H1 (cell line): ENCODE measurements at regions of chr19 and their contacts with region 1.

Region 1: DNA sequence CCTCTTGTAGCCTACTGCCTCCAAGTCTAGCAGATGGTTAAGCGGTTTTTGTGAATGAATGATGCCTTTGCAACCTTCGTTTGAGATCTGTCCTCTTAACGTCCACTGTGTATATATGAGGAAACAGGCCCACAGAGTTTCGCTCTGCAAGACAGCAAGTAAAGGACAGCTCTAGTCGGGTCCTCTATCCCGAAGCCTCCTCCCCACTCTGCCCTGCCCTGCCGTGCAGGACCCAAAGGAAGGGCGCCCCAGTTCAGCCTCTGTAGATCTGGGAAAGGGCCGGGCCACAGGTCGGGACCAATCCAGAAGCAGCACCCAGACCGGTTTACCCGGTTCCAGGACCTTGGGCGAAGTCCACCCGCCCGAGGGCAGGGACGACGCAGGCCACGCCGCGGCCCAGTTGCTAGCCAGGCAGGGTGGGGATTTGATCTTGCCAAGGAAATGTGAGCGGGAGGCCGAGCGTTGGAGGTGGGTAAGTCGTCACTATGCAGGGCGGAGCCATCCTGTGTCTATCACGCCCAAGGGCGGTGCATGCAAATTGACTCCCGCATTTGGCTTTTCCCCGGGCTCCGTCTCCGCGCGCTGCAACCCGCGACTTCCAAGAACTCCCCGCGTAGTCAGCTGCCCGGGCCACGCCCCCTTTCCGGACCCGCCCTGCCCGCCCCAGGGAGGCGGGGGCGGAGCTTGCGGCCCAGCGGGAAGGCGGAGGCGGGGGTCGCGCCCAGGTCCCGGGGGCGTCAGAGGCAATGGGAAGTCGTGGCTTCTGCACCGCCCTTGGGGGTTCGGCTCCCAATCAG is 12.5 kb downstream of the IER2 start:
- DNase-seq: peak; percentile 92 to 96
- H3K4me3 ChIP-seq: peak overlapping the region; percentile 13 to 62 (median 46); a peak in 7 of 8 replicates
- H3K27ac ChIP-seq: peak overlapping the region; percentile 95
- H3K4me1 ChIP-seq: peaks cover 16 to 31% (median 18%) of the 10 kb centered on the region in 4 experiments
- H3K27me3 ChIP-seq: no peaks in the 10 kb centered on the region
- CTCF ChIP-seq: no peak
- EP300 ChIP-seq: no peak
- POLR2A ChIP-seq: peak; percentile 17 to 66; a peak in 2 of 3 replicates
- RAD21 ChIP-seq: no peak; a peak in 1 of 4 replicates

Region 2: DNA sequence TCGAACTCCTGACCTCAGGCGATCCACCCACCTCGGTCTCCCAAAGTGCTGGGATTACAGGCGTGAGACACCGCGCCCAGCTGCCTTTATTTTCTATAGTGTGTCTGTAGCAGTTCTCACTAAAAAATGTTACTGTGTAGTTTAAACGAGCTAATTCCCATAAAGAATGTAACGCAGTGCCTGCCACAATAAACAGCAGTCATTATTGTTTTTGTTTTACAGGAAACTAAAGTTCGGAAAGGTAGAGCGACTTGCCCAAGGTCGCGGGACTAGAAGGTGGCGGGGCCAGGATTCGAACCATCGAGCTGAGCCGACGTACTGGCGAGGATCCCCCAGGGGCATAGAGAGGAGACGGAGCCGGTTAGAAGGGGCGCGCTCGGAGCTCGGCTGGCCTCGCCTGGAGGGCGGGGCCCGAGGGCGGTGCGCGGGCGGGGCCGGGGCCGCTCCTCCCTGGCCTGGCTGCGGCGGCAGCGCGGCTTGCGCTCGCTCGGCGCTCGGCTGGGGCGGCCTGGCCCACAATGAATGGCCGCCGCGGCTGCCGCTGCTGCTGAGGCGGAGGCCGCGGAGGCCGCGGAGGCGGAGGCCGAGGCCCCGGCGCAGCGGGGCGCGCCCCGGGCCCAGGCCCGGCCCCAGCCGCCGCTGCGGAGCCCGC is 44.8 kb before region 1 on chr19 and contains the start of gene NACC1:
- CTCF ChIA-PET with region 1: interaction called, 3 read pairs
- POLR2A ChIA-PET with region 1: interaction called, 51 read pairs
- DNase-seq: peak; percentile 70 to 87
- H3K4me3 ChIP-seq: peak within 1 kb of the TSS; percentile 92 to 100 (median 96)
- H3K27ac ChIP-seq: peak within 1 kb of the TSS; percentile 97
- H3K4me1 ChIP-seq: peaks cover 14 to 36% (median 26%) of the 10 kb centered on the region in 4 experiments
- H3K27me3 ChIP-seq: no peaks in the 10 kb centered on the region
- CTCF ChIP-seq: no peak
- EP300 ChIP-seq: peak in 1 of 2 experiments; percentile 13; a peak in 1 of 3 replicates
- POLR2A ChIP-seq: no peak; a peak in 1 of 3 replicates
- RAD21 ChIP-seq: no peak
- total RNA-seq, gene NACC1: 226 and 234 TPM in 2 replicates

Region 3: DNA sequence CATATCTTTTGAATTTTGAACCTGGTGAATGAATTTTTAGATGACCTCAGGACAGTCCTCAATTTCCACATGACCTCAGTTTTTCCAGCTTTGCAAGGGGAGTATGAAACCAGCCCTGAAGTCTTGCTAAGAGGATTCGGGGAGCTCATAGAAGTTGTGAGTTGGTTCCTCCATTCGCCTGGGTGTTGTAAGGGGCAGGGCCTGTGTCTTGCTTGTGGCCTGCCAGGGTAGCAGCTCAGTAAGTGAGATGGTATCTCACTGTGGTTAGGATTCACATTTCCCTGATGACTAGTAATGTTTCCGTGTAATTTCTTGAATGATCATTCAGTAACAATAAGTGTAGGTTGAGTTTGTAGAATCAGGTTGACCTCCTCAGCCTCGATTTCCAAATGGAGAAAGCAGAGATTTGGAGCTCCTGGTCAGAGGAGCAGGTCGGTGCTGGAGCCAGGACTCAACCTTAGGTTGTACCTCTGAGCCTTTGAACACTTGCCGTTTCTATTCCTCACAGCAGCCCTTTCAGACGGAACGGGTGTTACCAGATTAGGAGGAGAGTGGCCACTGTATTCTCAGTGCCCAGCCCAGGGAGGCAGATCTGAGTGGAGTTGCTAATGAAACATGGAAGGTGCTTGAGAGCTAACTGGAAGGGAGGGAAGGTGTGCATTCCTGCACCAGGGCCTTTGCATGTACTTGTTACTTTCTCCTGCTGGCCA is 30.1 kb before region 1 on chr19:
- CTCF ChIA-PET with region 1: interaction called, 3 read pairs
- POLR2A ChIA-PET with region 1: interaction called, 12 read pairs
- DNase-seq: no peak
- H3K4me3 ChIP-seq: no peak overlapping the region
- H3K27ac ChIP-seq: no peak overlapping the region
- H3K4me1 ChIP-seq: no peaks in the 10 kb centered on the region
- H3K27me3 ChIP-seq: no peaks in the 10 kb centered on the region
- CTCF ChIP-seq: no peak
- EP300 ChIP-seq: no peak
- POLR2A ChIP-seq: no peak
- RAD21 ChIP-seq: no peak

Region 4: DNA sequence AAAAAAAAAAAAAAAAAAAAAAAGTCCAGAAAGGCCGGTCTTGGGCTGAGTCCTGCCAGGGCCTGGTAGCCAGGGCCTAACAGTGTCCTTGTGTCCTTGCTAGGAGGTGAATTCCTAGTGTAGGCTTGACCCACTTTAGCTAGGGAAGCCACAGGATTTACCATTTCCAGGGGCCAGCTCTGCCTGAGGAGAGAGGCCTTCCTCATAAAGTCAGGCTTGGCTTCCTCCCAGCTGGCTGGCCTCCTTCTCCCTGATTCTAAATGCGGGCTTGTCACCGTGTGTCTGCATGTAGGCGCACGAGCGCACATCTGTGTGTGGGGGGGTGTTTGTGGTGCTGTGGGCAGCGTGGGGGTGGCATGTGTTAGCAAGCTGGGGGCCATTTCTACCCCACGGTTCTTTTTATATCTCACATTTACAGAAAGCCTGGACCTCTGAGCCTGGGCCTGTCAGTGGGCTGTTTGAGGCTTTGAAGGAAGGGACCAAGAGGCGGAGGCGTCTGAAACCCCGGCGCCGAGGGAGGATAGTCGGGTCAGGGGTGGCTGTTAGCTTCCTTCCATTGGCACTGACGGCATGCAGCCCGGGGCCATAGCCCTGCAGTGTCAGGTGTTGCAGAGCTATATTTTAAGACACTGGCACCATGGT is 19.2 kb after region 1 on chr19:
- CTCF ChIA-PET with region 1: interaction called, 6 read pairs
- POLR2A ChIA-PET with region 1: interaction called, 67 read pairs
- DNase-seq: no peak
- H3K4me3 ChIP-seq: no peak overlapping the region
- H3K27ac ChIP-seq: no peak overlapping the region
- H3K4me1 ChIP-seq: peaks cover 0 to 2% (median 1%) of the 10 kb centered on the region in 4 experiments; a peak in 2 of 7 replicates
- H3K27me3 ChIP-seq: no peaks in the 10 kb centered on the region
- CTCF ChIP-seq: no peak
- EP300 ChIP-seq: no peak
- POLR2A ChIP-seq: no peak
- RAD21 ChIP-seq: no peak

Region 5: GRCh38 chr19:13189600-13189999 is 26.9 kb after region 1 on chr19:
- CTCF ChIA-PET with region 1: interaction called, 41 read pairs
- POLR2A ChIA-PET with region 1: interaction called, 67 read pairs
- DNase-seq: no peak
- H3K4me3 ChIP-seq: no peak overlapping the region
- H3K27ac ChIP-seq: no peak overlapping the region
- H3K4me1 ChIP-seq: no peaks in the 10 kb centered on the region; a peak in 2 of 7 replicates
- H3K27me3 ChIP-seq: no peaks in the 10 kb centered on the region
- CTCF ChIP-seq: no peak
- EP300 ChIP-seq: no peak
- POLR2A ChIP-seq: no peak
- RAD21 ChIP-seq: no peak